ENCODE measurements at regions of chr7 and their contacts with region 1.

Region 1: DNA sequence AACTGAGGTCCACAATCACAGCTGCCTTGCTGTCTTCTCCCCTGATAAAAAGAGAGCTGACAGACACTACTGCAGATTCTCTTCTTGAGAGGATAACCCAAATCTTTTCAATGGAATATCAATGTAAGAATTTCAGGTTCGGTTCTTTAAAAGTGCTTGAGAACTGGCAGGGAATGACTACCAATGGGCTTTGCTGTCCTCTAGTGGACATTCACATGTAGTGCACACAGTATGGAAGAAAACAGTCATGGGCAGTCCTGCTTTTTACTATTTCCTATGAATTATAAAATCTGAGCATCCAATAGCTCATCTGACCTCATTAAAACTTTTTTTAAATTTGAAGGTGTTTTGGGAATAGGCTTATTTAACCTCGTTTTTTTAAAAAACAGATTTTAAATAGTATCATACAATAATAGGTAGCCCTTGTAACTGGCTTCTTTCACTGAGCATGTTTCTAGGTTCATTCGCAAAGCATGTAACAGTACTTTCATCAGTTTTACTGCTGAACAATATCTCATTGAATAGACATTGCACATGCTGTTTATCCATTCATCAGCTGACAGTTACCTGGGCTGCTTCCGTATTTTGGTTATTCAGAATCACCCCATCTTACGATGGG is 18.3 kb downstream of the FZD9 start:
- DNase-seq: no peak
- ATAC-seq: peak; percentile 84
- H3K4me3 Mint-ChIP-seq: no peak overlapping the region
- H3K27ac Mint-ChIP-seq: no peak overlapping the region
- H3K4me1 Mint-ChIP-seq: peaks cover 39% of the 10 kb centered on the region
- H3K27me3 Mint-ChIP-seq: no peaks in the 10 kb centered on the region
- CTCF ChIP-seq: peak; percentile 98

Region 2: GRCh38 chr7:73329861-73330581 is 121.9 kb before region 1 on chr7:
- CTCF ChIA-PET with region 1: interaction called, 33 read pairs
- POLR2A ChIA-PET with region 1: no interaction called
- intact Hi-C with region 1: no loop called
- DNase-seq: no peak
- ATAC-seq: no peak
- H3K4me3 Mint-ChIP-seq: no peak overlapping the region
- H3K27ac Mint-ChIP-seq: no peak overlapping the region
- H3K4me1 Mint-ChIP-seq: no peaks in the 10 kb centered on the region
- H3K27me3 Mint-ChIP-seq: no peaks in the 10 kb centered on the region
- CTCF ChIP-seq: no peak

Region 3: GRCh38 chr7:73468097-73468496 is 16.2 kb after region 1 on chr7:
- CTCF ChIA-PET with region 1: interaction called, 33 read pairs
- POLR2A ChIA-PET with region 1: no interaction called
- intact Hi-C with region 1: no loop called
- DNase-seq: no peak
- ATAC-seq: no peak
- H3K4me3 Mint-ChIP-seq: no peak overlapping the region
- H3K27ac Mint-ChIP-seq: no peak overlapping the region
- H3K4me1 Mint-ChIP-seq: no peaks in the 10 kb centered on the region
- H3K27me3 Mint-ChIP-seq: no peaks in the 10 kb centered on the region
- CTCF ChIP-seq: no peak

Region 4: DNA sequence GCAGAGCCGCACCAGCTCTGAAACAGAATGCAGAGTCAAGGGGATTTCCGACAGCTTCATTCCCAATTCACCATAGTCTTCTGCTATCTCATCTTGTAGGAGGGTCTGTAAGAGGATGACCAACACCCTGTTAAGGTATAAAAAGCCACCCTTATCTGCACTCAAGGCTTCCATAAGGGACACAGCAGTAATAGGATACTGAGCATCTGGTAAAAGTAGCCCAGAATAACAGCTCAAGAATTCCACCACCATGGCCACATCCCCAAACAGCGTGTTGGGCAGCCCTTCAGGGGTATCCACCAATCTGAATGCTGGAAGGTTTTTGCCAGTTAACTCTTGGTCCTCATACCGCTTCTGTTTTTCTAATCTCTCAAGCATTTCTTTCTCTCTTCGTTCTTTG is 25.5 kb after region 1 on chr7:
- CTCF ChIA-PET with region 1: interaction called, 15 read pairs
- POLR2A ChIA-PET with region 1: no interaction called
- intact Hi-C with region 1: no loop called
- DNase-seq: no peak
- ATAC-seq: no peak
- H3K4me3 Mint-ChIP-seq: no peak overlapping the region
- H3K27ac Mint-ChIP-seq: no peak overlapping the region
- H3K4me1 Mint-ChIP-seq: peaks cover 32% of the 10 kb centered on the region
- H3K27me3 Mint-ChIP-seq: no peaks in the 10 kb centered on the region
- CTCF ChIP-seq: no peak

Region 5: DNA sequence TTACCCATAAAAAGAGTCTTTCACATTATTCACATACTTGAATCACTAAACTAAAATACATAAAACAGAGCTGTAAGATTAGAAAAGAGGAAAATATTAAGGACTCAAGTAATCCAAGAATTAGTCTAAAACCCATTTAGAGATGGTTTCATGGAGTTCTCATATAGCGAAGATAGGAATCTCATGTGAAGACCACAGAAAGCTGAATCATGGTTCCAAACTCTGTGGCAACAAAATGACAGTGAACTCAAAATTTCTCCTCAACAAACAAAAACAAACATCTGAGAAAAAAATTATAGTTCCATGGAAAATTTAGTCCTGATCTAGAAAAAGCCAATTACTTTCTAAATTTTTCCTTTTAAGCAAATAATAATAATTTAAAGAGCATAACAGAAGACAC is 35.6 kb after region 1 on chr7:
- CTCF ChIA-PET with region 1: interaction called, 17 read pairs
- POLR2A ChIA-PET with region 1: no interaction called
- intact Hi-C with region 1: no loop called
- DNase-seq: no peak
- ATAC-seq: no peak
- H3K4me3 Mint-ChIP-seq: no peak overlapping the region
- H3K27ac Mint-ChIP-seq: no peak overlapping the region
- H3K4me1 Mint-ChIP-seq: peaks cover 2% of the 10 kb centered on the region
- H3K27me3 Mint-ChIP-seq: no peaks in the 10 kb centered on the region
- CTCF ChIP-seq: no peak

Measured in activated CD8-positive, alpha-beta T cell treated with anti-CD3 and anti-CD28 coated beads for 36 hours (primary cell).